CD8-positive, alpha-beta T cell (primary cell): ENCODE measurements at regions of chr3 and their contacts with region 1.

Region 1: GRCh38 chr3:118960876-118961450 is 73.7 kb downstream of the IGSF11 start:
- DNase-seq: no peak
- ATAC-seq: no peak
- H3K4me3 ChIP-seq: no peak overlapping the region
- H3K4me3 Mint-ChIP-seq: no peak overlapping the region
- H3K27ac ChIP-seq: no peak overlapping the region
- H3K27ac Mint-ChIP-seq: no peak overlapping the region
- H3K4me1 ChIP-seq: peaks cover 21% of the 10 kb centered on the region
- H3K4me1 Mint-ChIP-seq: peaks cover 22% of the 10 kb centered on the region
- H3K27me3 ChIP-seq: no peaks in the 10 kb centered on the region
- H3K27me3 Mint-ChIP-seq: no peaks in the 10 kb centered on the region
- CTCF ChIP-seq: no peak

Region 2: DNA sequence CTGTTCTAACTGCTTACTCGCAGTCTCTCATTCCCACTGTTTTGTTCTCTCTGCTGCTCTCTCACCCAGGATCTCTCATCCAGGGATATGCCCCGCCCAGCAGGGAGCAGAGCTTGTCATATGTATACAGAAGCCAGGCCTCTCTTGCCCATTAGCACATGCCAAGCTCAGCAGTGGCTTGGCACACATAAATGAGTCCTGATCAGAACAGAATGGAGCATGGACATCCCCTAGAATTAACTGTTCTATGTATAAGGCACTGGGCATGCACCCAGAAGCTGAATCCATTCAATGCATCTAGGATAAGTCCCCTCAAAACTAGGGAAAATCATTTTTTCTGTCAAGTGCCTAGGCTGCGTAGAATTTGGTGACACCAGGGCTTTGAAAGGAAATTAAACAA is 12.1 kb after region 1 on chr3:
- CTCF ChIA-PET with region 1: no interaction called
- POLR2A ChIA-PET with region 1: interaction called, 3 read pairs
- intact Hi-C with region 1: loop called in 1 of 2 experiments (anchors 2 kb)
- DNase-seq: no peak
- ATAC-seq: no peak
- H3K4me3 ChIP-seq: no peak overlapping the region
- H3K4me3 Mint-ChIP-seq: no peak overlapping the region
- H3K27ac ChIP-seq: no peak overlapping the region
- H3K27ac Mint-ChIP-seq: no peak overlapping the region
- H3K4me1 ChIP-seq: no peaks in the 10 kb centered on the region
- H3K4me1 Mint-ChIP-seq: peaks cover 12% of the 10 kb centered on the region
- H3K27me3 ChIP-seq: no peaks in the 10 kb centered on the region
- H3K27me3 Mint-ChIP-seq: no peaks in the 10 kb centered on the region
- CTCF ChIP-seq: no peak

Region 3: DNA sequence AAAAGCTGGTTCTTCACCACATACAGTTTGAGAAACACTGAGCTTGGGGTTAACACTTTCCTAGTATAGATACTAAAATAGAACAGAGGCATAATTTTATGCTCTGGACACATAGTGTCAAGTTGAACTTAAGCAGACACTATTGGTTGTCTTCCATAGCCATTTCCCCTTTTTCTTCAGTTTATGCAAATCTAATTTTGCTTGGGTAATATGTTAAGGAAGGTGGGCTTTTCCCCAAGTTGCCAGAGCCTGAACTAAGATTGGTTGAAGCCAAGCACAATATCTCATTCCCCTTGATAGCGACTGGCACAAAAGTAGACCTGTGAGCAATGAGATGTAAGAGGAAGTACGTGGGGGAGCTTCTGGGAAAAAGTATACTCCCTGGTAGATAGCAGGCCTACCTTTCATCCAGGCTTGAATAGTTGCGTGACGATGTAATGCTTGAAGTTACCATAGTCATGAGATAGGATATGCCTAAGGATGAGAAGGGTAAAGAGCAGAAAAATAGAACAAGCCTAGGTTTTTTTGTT is 704.0 kb after region 1 on chr3:
- CTCF ChIA-PET with region 1: no interaction called
- POLR2A ChIA-PET with region 1: no interaction called
- intact Hi-C with region 1: loop called in 1 of 2 experiments (anchors 5 kb)
- DNase-seq: no peak
- ATAC-seq: no peak
- H3K4me3 ChIP-seq: no peak overlapping the region
- H3K4me3 Mint-ChIP-seq: no peak overlapping the region
- H3K27ac ChIP-seq: no peak overlapping the region
- H3K27ac Mint-ChIP-seq: no peak overlapping the region
- H3K4me1 ChIP-seq: no peaks in the 10 kb centered on the region
- H3K4me1 Mint-ChIP-seq: peaks cover 1% of the 10 kb centered on the region
- H3K27me3 ChIP-seq: no peaks in the 10 kb centered on the region
- H3K27me3 Mint-ChIP-seq: no peaks in the 10 kb centered on the region
- CTCF ChIP-seq: no peak